Activated B cell treated with CpG ODN at 0.5 μM for 24 hours (primary cell): ENCODE measurements at regions of chr3 and their contacts with region 1.

Region 1: GRCh38 chr3:187738331-187739093 is 6.8 kb downstream of the BCL6 start:
- DNase-seq: peak; percentile 33
- ATAC-seq: peak; percentile 41
- H3K4me3 Mint-ChIP-seq: peak overlapping the region; percentile 98
- H3K27ac Mint-ChIP-seq: peak overlapping the region; percentile 81
- H3K4me1 Mint-ChIP-seq: peaks cover 61% of the 10 kb centered on the region
- H3K27me3 Mint-ChIP-seq: no peaks in the 10 kb centered on the region
- CTCF ChIP-seq: no peak

Region 2: DNA sequence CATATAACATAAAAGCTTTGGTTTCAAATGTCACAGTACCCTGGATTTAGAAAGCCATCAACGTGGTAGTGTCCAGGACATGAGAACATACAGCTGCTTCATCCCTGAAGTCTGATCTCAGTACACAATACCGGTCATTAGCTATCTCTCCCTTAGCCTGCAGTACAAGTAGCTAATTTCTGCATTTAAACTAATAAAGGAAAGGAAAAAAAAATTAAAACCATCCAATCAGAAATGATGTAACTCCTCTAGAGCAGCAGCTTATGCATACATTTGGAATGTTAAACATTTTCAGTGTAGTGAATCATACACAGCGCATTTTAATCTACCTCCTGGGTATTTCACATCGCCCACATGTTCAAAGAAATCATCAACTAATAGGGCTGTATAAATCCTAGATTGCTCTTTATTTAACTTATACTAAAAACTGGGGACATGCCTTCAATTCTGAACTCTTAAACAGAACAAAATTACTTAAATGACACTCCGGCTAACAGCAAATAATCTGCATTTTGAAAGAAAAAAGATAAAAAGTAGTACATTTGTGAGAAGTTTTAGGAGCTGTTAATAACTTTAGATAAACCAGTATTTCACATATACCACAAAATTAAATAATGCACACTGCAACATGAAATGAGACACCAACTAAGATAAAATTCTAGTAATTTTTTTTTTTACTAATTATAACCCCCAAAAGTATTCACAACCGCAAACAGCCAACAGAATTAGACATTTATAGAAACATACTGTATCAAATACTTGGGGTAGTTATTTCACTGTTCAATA is 1917.3 kb before region 1 on chr3:
- CTCF ChIA-PET with region 1: no interaction called
- POLR2A ChIA-PET with region 1: no interaction called
- intact Hi-C with region 1: no loop called
- DNase-seq: no peak
- ATAC-seq: no peak
- H3K4me3 Mint-ChIP-seq: no peak overlapping the region
- H3K27ac Mint-ChIP-seq: no peak overlapping the region
- H3K4me1 Mint-ChIP-seq: peaks cover 10% of the 10 kb centered on the region
- H3K27me3 Mint-ChIP-seq: peaks cover 42% of the 10 kb centered on the region
- CTCF ChIP-seq: no peak

Region 3: GRCh38 chr3:187788984-187789857 is 50.7 kb after region 1 on chr3:
- CTCF ChIA-PET with region 1: no interaction called
- POLR2A ChIA-PET with region 1: no interaction called
- intact Hi-C with region 1: no loop called
- DNase-seq: no peak
- ATAC-seq: peak; percentile 34
- H3K4me3 Mint-ChIP-seq: no peak overlapping the region
- H3K27ac Mint-ChIP-seq: peak overlapping the region; percentile 36
- H3K4me1 Mint-ChIP-seq: peaks cover 16% of the 10 kb centered on the region
- H3K27me3 Mint-ChIP-seq: no peaks in the 10 kb centered on the region
- CTCF ChIP-seq: no peak

Region 4: DNA sequence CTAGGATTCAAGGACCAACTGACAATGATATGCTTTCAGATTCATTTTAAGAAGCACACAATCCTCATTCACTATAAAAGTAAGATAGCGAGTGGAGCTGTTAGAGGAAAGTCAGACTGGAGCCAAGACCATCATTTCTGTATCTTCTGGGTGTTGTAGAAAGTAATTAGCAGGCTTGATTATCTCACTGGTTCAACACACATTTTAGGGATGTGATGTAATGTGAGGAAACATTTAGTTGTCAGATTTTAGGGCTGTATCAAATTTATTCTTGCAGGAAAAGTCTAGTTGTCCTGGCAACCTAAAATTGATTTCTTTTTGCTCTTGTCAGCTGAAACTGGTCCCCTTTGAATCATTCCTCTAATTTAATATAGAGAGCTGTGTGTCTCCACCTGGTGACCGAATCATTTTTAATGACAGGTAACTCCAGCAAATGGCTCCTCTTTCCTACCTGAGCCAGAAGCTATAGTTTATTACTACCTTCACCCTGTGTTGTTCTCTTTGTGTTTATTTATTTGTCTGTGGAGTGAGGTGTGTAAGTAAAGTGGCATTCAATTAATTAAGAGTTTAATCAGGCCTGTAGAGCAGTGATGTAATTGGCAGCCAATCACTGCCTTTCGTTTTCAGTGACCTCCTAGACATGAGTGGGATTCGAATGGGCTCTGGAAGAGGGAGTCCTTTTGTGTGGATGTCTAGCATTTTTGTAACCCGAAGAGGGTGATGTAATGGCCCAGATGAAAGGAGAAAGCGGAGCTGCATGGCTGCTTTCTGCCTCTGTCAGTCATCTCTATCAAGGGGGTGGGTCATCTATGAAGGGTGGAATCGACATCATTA is 541.2 kb after region 1 on chr3:
- CTCF ChIA-PET with region 1: interaction called, 16 read pairs
- POLR2A ChIA-PET with region 1: interaction called, 8 read pairs
- intact Hi-C with region 1: loop called (anchors 1 kb)
- DNase-seq: no peak
- ATAC-seq: no peak
- H3K4me3 Mint-ChIP-seq: no peak overlapping the region
- H3K27ac Mint-ChIP-seq: no peak overlapping the region
- H3K4me1 Mint-ChIP-seq: peaks cover 24% of the 10 kb centered on the region
- H3K27me3 Mint-ChIP-seq: no peaks in the 10 kb centered on the region
- CTCF ChIP-seq: no peak

Region 5: GRCh38 chr3:188400494-188401243 is 662.2 kb after region 1 on chr3:
- CTCF ChIA-PET with region 1: interaction called, 41 read pairs
- POLR2A ChIA-PET with region 1: interaction called, 68 read pairs
- intact Hi-C with region 1: no loop called
- DNase-seq: no peak
- ATAC-seq: peak; percentile 82
- H3K4me3 Mint-ChIP-seq: peak overlapping the region; percentile 56
- H3K27ac Mint-ChIP-seq: peak overlapping the region; percentile 91
- H3K4me1 Mint-ChIP-seq: peaks cover 93% of the 10 kb centered on the region
- H3K27me3 Mint-ChIP-seq: no peaks in the 10 kb centered on the region
- CTCF ChIP-seq: no peak

Region 6: DNA sequence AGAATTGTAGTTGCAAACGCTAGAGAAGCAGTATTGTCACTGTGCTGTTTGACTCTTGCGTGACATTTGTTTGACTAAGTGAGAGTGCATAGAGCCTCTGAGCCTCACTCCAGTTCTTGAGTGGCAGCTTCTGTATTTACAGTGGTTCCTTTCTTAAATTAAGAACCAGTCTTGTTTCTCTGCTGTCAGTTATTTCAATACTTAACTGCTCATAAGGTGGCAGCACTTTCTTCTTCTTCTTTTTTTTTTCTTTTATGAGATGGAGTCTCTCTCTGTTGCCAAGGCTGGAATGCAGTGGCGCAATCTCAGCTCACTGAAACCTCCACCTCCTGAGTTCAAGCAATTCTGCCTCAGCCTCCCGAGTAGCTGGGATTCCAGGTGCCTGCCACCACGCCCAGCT is 787.5 kb after region 1 on chr3:
- CTCF ChIA-PET with region 1: interaction called, 9 read pairs
- POLR2A ChIA-PET with region 1: no interaction called
- intact Hi-C with region 1: loop called (anchors 5 kb)
- DNase-seq: no peak
- ATAC-seq: no peak
- H3K4me3 Mint-ChIP-seq: no peak overlapping the region
- H3K27ac Mint-ChIP-seq: no peak overlapping the region
- H3K4me1 Mint-ChIP-seq: peaks cover 15% of the 10 kb centered on the region
- H3K27me3 Mint-ChIP-seq: no peaks in the 10 kb centered on the region
- CTCF ChIP-seq: no peak

Region 7: GRCh38 chr3:188697127-188697526 is 958.6 kb after region 1 on chr3:
- CTCF ChIA-PET with region 1: interaction called, 5 read pairs
- POLR2A ChIA-PET with region 1: interaction called, 9 read pairs
- intact Hi-C with region 1: loop called (anchors 1 kb)
- DNase-seq: no peak
- ATAC-seq: peak; percentile 80
- H3K4me3 Mint-ChIP-seq: peak overlapping the region; percentile 20
- H3K27ac Mint-ChIP-seq: peak overlapping the region; percentile 86
- H3K4me1 Mint-ChIP-seq: peaks cover 72% of the 10 kb centered on the region
- H3K27me3 Mint-ChIP-seq: no peaks in the 10 kb centered on the region
- CTCF ChIP-seq: no peak

Region 8: GRCh38 chr3:188900421-188900951 is 1162.0 kb after region 1 on chr3:
- CTCF ChIA-PET with region 1: no interaction called
- POLR2A ChIA-PET with region 1: interaction called, 12 read pairs
- intact Hi-C with region 1: no loop called
- DNase-seq: no peak
- ATAC-seq: no peak
- H3K4me3 Mint-ChIP-seq: no peak overlapping the region
- H3K27ac Mint-ChIP-seq: no peak overlapping the region
- H3K4me1 Mint-ChIP-seq: no peaks in the 10 kb centered on the region
- H3K27me3 Mint-ChIP-seq: no peaks in the 10 kb centered on the region
- CTCF ChIP-seq: no peak

Region 9: GRCh38 chr3:189148081-189148507 is 1409.6 kb after region 1 on chr3:
- CTCF ChIA-PET with region 1: interaction called, 27 read pairs
- POLR2A ChIA-PET with region 1: interaction called, 4 read pairs
- intact Hi-C with region 1: loop called (anchors 1 kb)
- DNase-seq: peak; percentile 27
- ATAC-seq: peak; percentile 60
- H3K4me3 Mint-ChIP-seq: no peak overlapping the region
- H3K27ac Mint-ChIP-seq: no peak overlapping the region
- H3K4me1 Mint-ChIP-seq: no peaks in the 10 kb centered on the region
- H3K27me3 Mint-ChIP-seq: peaks cover 8% of the 10 kb centered on the region
- CTCF ChIP-seq: peak; percentile 56